ENCODE measurements at regions of chr12 and their contacts with region 1.

Region 1: GRCh38 chr12:49553512-49554088 is 14.3 kb downstream of the MCRS1 start:
- DNase-seq: peak; percentile 47
- ATAC-seq: peak; percentile 56
- H3K4me3 Mint-ChIP-seq: no peak overlapping the region
- H3K27ac Mint-ChIP-seq: no peak overlapping the region
- H3K4me1 Mint-ChIP-seq: peaks cover 17% of the 10 kb centered on the region
- H3K27me3 Mint-ChIP-seq: peaks cover 4% of the 10 kb centered on the region

Region 2: GRCh38 chr12:49567611-49568441 is 14.2 kb after region 1 on chr12 and contains the start of gene MCRS1:
- CTCF ChIA-PET with region 1: interaction called, 41 read pairs
- POLR2A ChIA-PET with region 1: interaction called, 5 read pairs
- DNase-seq: peak; percentile 94
- ATAC-seq: peak; percentile 78
- H3K4me3 Mint-ChIP-seq: peak within 1 kb of the TSS; percentile 94
- H3K27ac Mint-ChIP-seq: peak within 1 kb of the TSS; percentile 98
- H3K4me1 Mint-ChIP-seq: peaks cover 68% of the 10 kb centered on the region
- H3K27me3 Mint-ChIP-seq: no peaks in the 10 kb centered on the region
- total RNA-seq, gene MCRS1: 85.9 to 86.1 TPM

Region 3: GRCh38 chr12:49580572-49581535 is 27.3 kb after region 1 on chr12:
- CTCF ChIA-PET with region 1: interaction called, 41 read pairs
- POLR2A ChIA-PET with region 1: no interaction called
- DNase-seq: peak; percentile 77
- ATAC-seq: peak; percentile 92
- H3K4me3 Mint-ChIP-seq: no peak overlapping the region
- H3K27ac Mint-ChIP-seq: no peak overlapping the region
- H3K4me1 Mint-ChIP-seq: peaks cover 14% of the 10 kb centered on the region
- H3K27me3 Mint-ChIP-seq: no peaks in the 10 kb centered on the region